Ascending aorta (tissue), 2 donors: ENCODE measurements at regions of chr15 and their contacts with region 1.

Region 1: DNA sequence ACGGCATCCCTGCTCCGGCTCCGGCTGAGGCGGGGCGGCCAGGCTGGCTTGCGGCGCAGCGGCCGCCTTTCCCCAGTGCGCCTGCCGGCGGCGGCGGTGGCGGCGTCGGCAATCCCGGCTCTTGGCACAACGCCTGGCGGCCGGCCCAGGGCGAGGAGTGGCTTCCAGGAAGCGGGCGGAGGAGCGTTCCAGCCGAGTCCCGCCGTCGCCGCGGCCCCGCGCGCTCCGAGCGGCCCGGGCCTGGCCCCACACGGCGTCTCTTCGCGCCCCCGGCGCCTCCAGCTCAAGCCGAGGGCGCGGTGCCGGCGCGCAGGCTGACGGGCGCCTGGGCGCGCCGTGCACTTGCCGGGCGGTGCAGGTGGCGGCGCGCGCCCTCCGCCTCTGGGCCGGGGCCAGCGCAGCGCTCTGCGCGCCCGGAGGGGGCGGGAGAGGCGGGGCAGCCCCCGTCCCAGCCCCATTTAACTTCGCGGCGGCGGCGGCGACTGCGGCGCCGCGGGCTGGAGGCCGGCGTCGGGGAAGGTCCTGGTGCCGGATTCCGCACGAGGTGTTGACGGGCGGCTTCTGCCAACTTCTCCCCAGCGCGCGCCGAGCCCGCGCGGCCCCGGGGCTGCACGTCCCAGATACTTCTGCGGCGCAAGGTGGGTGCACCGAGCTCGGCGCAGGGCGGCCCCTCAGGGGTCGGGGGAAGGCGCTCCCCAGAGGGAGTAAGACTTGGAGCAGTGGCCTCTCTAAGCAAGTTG is at the start of gene ADAMTSL3:
- DNase-seq: peak in 1 of 2 donors; percentile 88
- H3K4me3 ChIP-seq: peak within 1 kb of the TSS; percentile 71 to 74
- H3K27ac ChIP-seq: peak within 1 kb of the TSS; percentile 89 to 91
- H3K4me1 ChIP-seq: peaks cover 9 to 28% of the 10 kb centered on the region in 2 donors
- H3K27me3 ChIP-seq: no peaks in the 10 kb centered on the region
- CTCF ChIP-seq: peak in 2 of 3 experiments; percentile 8 to 27
- total RNA-seq, gene ADAMTSL3: 28.1 TPM

Region 2: GRCh38 chr15:83207622-83208411 is 446.0 kb before region 1 on chr15 and contains the start of gene HDGFL3:
- intact Hi-C with region 1: loop called (anchors 2 kb)
- DNase-seq: peak in 1 of 2 donors; percentile 73
- H3K4me3 ChIP-seq: peak within 1 kb of the TSS; percentile 79 to 100
- H3K27ac ChIP-seq: peak within 1 kb of the TSS; percentile 89 to 100
- H3K4me1 ChIP-seq: peaks cover 4% of the 10 kb centered on the region in 2 donors
- H3K27me3 ChIP-seq: no peaks in the 10 kb centered on the region
- CTCF ChIP-seq: no peak
- total RNA-seq, gene HDGFL3: 20.8 TPM

Region 3: GRCh38 chr15:83571820-83572707 is 81.7 kb before region 1 on chr15:
- intact Hi-C with region 1: loop called (anchors 5 kb)
- DNase-seq: no peak
- H3K4me3 ChIP-seq: no peak overlapping the region
- H3K27ac ChIP-seq: no peak overlapping the region
- H3K4me1 ChIP-seq: no peaks in the 10 kb centered on the region
- H3K27me3 ChIP-seq: no peaks in the 10 kb centered on the region
- CTCF ChIP-seq: peak in 2 of 3 experiments; percentile 61 to 74

Region 4: DNA sequence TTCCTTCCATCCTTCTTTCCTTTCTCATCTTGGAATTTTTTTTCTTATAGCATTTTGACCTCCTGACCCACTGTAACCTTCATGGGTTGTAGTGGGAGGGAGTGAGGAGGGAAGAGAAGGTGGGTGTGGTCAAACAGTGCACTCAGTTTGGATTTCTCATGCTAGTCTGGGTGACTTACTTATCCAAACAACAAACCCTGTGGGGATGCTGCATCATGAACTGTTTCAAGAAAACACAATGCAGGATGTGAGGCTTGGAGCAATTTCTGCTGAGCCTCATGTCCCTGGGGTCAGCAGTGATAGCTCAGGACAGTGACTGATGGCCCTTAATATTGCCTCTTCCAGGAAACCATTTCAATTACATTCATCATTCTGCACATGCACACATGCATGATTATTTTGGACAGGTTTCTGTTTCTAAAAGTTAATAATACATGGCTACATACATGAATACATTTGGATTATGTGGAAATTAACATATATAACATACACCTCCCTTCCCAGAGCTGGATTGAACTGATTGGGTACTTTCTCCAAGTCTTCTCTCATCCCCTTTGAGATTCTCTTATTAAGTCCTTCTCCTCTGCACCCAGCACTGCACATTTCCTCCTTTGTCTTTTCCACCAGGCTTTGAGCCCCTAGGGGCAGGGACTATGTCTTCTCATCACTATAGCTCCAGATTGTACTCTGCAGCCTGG is 61.3 kb after region 1 on chr15:
- intact Hi-C with region 1: loop called (anchors 5 kb)
- DNase-seq: no peak
- H3K4me3 ChIP-seq: no peak overlapping the region
- H3K27ac ChIP-seq: no peak overlapping the region
- H3K4me1 ChIP-seq: peaks cover 12 to 63% of the 10 kb centered on the region in 2 donors
- H3K27me3 ChIP-seq: no peaks in the 10 kb centered on the region
- CTCF ChIP-seq: no peak

Region 5: DNA sequence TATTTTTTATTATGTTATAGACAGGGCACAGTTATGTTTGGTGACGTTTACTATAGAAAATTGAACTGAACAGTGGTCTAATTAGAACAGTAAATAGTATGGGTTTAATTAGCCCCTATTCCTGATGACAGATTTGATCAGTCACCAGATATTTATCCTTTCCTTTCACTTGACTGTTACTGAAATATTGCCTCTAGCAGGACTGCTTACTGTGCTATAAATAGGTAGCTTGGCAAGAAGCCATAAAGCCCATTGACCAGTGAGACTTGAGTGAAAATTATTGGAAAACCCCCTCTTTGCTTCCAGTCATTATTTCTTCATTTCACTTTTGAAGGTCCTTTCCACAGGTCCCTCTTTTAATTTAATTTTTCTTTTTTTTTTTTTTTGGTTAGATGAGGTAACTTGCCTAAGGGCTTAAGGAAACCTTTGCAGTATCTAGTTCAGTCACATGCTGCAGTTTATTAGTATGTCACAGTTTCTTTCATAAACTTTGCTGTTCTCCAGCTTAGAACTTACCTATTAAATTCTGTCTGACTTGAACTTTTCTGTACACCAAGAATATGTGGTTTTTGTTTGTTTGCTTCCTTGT is 115.7 kb after region 1 on chr15:
- intact Hi-C with region 1: loop called (anchors 5 kb)
- DNase-seq: no peak
- H3K4me3 ChIP-seq: no peak overlapping the region
- H3K27ac ChIP-seq: no peak overlapping the region
- H3K4me1 ChIP-seq: peaks cover 0 to 23% of the 10 kb centered on the region in 2 donors
- H3K27me3 ChIP-seq: no peaks in the 10 kb centered on the region
- CTCF ChIP-seq: no peak